ENCODE measurements at regions of chr1 and their contacts with region 1.

Region 1: GRCh38 chr1:167401260-167401873 is 117.0 kb downstream of the CD247 start:
- DNase-seq: peak; percentile 44 to 54
- H3K4me3 ChIP-seq: no peak overlapping the region
- H3K27ac ChIP-seq: no peak overlapping the region
- H3K4me1 ChIP-seq: peaks cover 12% of the 10 kb centered on the region
- H3K27me3 ChIP-seq: no peaks in the 10 kb centered on the region
- CTCF ChIP-seq: peak; percentile 78

Region 2: DNA sequence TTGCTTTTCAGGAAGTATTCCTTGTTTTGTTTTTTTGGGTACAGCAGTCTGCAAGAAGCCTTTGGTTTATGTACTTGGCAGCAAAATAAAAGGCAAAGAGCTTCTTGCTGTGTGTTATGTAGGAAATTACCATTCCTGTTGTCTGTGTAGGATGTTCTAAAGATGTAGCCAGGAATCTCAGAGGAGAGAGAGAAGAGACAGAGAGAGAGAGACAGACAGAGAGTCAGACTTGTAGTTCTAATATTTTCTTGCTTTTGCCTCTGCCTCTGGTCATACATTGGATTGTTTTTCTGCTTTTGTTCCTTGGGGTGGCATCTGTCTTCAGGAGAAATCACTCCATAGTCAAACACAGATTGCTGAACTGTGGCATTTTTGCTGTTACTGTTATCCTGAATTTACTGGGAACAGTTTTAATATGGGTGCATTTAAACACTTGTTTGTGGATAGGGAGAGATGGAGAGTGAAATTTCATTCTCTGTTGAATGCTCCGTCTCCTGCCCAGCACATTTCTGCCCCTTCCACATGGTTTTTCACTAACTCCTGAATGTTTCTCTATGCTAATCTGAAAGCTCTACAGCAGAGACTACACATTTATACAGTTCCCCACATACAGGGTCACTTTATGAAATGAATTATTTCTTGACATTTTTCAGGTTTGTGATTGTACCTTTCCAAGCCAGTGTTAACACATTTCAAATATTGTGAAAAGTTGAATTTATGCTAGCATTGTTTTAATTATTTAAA is 130.8 kb before region 1 on chr1:
- CTCF ChIA-PET with region 1: no interaction called
- POLR2A ChIA-PET with region 1: no interaction called
- intact Hi-C with region 1: loop called (anchors 5 kb)
- DNase-seq: no peak
- H3K4me3 ChIP-seq: no peak overlapping the region
- H3K27ac ChIP-seq: no peak overlapping the region
- H3K4me1 ChIP-seq: no peaks in the 10 kb centered on the region
- H3K27me3 ChIP-seq: no peaks in the 10 kb centered on the region
- CTCF ChIP-seq: no peak

Region 3: GRCh38 chr1:167442124-167442848 is 40.9 kb after region 1 on chr1:
- CTCF ChIA-PET with region 1: no interaction called
- POLR2A ChIA-PET with region 1: interaction called, 3 read pairs
- intact Hi-C with region 1: loop called (anchors 1 kb)
- DNase-seq: peak; percentile 92
- H3K4me3 ChIP-seq: 0 out of 2 replicates have a peak overlapping the region, but pooled peaks have one; percentile 3
- H3K27ac ChIP-seq: peak overlapping the region; percentile 52
- H3K4me1 ChIP-seq: peaks cover 21% of the 10 kb centered on the region
- H3K27me3 ChIP-seq: no peaks in the 10 kb centered on the region
- CTCF ChIP-seq: peak; percentile 91

Region 4: DNA sequence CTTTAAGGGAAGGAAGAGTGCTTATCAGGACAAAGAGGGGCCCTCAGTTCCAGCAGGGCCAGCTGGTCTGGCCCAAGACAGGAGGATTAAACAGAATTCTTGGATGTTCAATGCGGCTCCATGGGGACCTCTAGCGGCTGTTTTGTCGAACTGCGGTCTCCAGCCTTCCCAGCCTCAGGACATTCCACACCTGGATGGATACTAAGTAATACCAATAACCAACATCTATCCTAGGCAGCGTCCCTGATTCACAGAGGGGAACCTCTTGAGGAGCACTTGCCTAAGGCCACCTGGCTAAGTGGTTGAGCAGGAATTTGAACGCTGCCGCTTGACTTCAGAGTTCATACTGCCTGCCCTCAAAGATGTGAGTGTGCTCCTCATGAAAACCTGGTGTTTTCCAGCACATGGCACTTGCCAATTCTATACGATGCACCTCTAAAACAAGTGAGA is 132.5 kb after region 1 on chr1:
- CTCF ChIA-PET with region 1: interaction called, 4 read pairs
- POLR2A ChIA-PET with region 1: no interaction called
- intact Hi-C with region 1: loop called (anchors 1 kb)
- DNase-seq: peak; percentile 52 to 67
- H3K4me3 ChIP-seq: no peak overlapping the region
- H3K27ac ChIP-seq: no peak overlapping the region
- H3K4me1 ChIP-seq: no peaks in the 10 kb centered on the region
- H3K27me3 ChIP-seq: no peaks in the 10 kb centered on the region
- CTCF ChIP-seq: peak; percentile 91

Region 5: DNA sequence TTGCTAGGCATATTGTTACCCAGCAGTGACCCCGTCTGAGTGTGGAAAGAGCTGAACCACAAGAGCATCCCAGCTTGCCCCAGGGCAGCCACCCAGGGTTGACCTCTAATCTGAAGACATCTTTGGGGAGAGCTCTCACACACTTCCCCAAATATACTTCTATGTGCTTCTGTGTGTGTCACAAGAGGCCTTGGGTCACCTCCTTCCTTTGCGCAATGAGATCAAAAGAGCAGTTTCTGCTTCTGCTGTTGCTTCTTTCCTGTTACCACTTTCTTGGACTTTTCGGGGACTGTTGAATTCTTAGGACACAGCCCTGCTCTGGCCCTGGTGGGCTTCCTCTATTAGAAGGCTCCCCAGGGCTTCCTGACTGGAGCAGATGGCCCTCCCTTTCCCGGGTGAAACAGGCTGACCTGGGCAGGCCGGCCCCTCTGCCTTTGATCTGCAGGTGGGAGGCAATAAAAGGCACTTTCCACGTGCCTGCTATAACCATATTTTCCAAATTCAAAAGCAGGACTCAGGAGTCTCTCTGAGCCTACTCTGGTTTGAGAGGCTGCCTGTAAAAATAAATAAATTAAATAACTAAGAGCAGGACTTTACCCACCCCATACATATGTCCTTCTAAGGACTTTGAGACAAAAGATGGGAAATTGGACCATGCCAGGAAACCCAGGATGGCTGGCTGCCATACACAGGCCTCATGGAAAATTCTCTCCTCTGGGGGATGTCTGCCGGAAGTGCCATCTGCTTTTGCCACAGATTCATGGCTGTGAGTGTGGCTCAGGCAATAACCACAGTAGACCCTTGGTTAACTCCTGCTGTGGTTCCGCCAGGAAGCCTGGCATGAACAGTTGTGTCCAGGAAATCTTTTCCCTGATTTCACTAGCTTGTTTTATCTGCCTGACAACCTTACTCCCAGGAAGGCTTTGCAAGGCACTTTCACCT is 200.3 kb after region 1 on chr1:
- CTCF ChIA-PET with region 1: no interaction called
- POLR2A ChIA-PET with region 1: no interaction called
- intact Hi-C with region 1: no loop called
- DNase-seq: peak; percentile 6 to 79
- H3K4me3 ChIP-seq: no peak overlapping the region
- H3K27ac ChIP-seq: no peak overlapping the region
- H3K4me1 ChIP-seq: peaks cover 28% of the 10 kb centered on the region
- H3K27me3 ChIP-seq: no peaks in the 10 kb centered on the region
- CTCF ChIP-seq: no peak

Region 6: DNA sequence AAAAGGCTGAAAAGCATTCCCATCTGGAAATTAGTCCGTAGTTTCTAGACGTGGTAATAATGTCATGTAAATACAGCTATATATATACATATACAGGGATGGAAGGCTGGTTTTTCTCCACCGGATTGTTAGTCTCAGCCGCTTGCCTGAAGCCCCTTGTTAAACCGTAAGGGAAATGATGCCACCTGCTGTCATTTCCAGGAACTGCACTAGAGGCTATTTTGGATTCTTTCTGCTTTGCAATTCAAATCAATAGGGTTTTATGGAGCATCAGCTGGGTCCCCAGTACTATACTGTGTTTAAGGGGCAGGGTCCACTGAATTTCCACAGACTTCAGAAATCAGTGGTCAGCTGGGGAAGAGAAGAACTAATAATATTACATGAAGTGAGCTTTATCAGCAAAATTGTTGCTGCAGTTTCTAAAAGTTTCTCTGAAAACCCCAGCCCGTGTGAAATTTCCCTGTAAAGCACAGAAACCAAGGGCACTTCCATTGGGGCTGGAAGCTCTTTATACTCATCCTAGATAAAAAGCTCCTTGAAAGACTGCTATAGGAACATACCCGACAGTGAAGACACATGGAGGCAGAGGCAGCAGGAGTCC is 286.7 kb after region 1 on chr1:
- CTCF ChIA-PET with region 1: interaction called, 3 read pairs
- POLR2A ChIA-PET with region 1: interaction called, 6 read pairs
- intact Hi-C with region 1: loop called (anchors 1 kb)
- DNase-seq: peak; percentile 63
- H3K4me3 ChIP-seq: no peak overlapping the region
- H3K27ac ChIP-seq: no peak overlapping the region
- H3K4me1 ChIP-seq: peaks cover 13% of the 10 kb centered on the region
- H3K27me3 ChIP-seq: no peaks in the 10 kb centered on the region
- CTCF ChIP-seq: peak; percentile 95